Activated CD8-positive, alpha-beta T cell treated with anti-CD3 and anti-CD28 coated beads, Interleukin-2, amount 10 ng/mL, durations not matched to agents 7 days and 5 days (primary cell): ENCODE measurements at regions of chr1 and their contacts with region 1.

Region 1: DNA sequence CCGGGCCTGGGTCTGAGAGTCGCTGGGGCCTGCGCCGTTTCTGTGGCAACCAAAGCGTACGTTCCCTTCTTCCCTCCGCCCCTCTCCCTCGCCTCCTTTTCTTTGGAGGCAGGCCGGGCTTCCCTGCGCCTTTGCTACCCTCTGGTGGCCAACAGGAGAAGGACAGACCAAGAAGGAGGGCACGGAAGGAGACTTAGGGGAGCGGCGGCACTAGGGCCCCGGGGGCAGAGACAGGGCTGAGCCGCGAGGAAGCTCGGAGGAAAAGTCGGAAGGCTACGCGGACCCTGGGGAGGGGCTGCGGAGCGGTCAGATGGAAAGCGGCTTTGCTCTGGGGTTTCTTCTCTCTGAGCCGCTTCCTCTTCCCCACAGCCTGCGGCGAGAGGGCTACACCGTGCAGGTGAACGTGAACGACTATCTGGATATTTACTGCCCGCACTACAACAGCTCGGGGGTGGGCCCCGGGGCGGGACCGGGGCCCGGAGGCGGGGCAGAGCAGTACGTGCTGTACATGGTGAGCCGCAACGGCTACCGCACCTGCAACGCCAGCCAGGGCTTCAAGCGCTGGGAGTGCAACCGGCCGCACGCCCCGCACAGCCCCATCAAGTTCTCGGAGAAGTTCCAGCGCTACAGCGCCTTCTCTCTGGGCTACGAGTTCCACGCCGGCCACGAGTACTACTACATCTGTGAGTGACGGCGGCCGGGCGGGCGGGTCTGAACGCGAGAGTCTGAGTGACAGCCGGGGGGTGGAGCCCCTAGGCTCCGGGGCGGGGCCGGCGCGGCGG is 6.3 kb downstream of the EFNA3 start:
- DNase-seq: peak; percentile 96
- ATAC-seq: peak; percentile 86
- H3K4me3 Mint-ChIP-seq: peak overlapping the region; percentile 91
- H3K27ac Mint-ChIP-seq: peak overlapping the region; percentile 95
- H3K4me1 Mint-ChIP-seq: peaks cover 41% of the 10 kb centered on the region
- H3K27me3 Mint-ChIP-seq: peaks cover 28% of the 10 kb centered on the region

Region 2: DNA sequence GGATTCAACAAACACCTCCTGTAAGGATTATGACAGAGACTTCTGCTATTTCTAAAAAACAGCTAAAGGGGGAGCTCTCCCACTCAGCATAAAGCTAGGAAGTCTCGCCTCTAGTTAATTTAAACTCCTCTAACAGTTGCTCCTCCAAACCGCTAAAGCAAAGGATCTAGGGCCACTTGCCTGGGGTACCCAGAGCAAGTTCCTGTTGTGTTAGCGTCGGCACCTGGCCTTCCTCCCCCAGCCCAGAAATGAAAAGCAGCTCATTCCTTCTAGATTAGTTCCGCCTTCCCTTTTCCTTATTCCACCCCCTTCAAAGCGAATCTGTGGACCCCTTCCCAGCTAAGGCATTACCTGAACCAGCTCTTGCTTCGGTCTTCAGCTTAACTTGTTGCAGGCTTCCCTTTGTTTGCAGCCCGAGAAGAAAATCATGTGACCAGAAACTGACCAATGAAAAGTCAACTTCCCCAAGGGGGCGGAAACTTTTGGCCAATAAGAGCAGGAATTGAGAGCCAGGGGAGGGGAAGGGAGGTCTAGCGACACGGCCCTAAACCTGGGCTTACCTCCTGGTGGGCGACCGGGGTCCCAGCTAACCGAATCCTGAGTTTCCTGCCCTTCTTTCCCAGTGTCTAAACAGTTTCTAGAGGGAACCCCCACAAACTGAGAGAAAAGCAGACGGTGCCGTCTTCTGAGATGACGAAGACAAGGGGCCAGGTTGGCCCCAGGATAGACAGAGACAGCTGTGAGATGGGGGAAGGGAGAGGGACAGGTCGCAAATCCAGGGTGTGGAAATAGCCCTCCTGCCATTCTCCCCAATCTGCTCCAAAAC is 129.0 kb before region 1 on chr1 and contains the start of gene PBXIP1:
- CTCF ChIA-PET with region 1: interaction called, 10 read pairs
- POLR2A ChIA-PET with region 1: no interaction called
- DNase-seq: peak; percentile 91
- ATAC-seq: peak; percentile 47
- H3K4me3 Mint-ChIP-seq: peak within 1 kb of the TSS; percentile 91
- H3K27ac Mint-ChIP-seq: peak within 1 kb of the TSS; percentile 96
- H3K4me1 Mint-ChIP-seq: peaks cover 80% of the 10 kb centered on the region
- H3K27me3 Mint-ChIP-seq: no peaks in the 10 kb centered on the region
- total RNA-seq, gene PBXIP1: 44.5 to 48.2 TPM

Region 3: GRCh38 chr1:154992721-154993571 is 92.0 kb before region 1 on chr1:
- CTCF ChIA-PET with region 1: interaction called, 10 read pairs
- POLR2A ChIA-PET with region 1: no interaction called
- DNase-seq: no peak
- ATAC-seq: no peak
- H3K4me3 Mint-ChIP-seq: no peak overlapping the region
- H3K27ac Mint-ChIP-seq: no peak overlapping the region
- H3K4me1 Mint-ChIP-seq: peaks cover 27% of the 10 kb centered on the region
- H3K27me3 Mint-ChIP-seq: no peaks in the 10 kb centered on the region

Region 4: GRCh38 chr1:155050560-155051341 is 34.2 kb before region 1 on chr1 and contains the start of gene ADAM15:
- CTCF ChIA-PET with region 1: interaction called, 61 read pairs
- POLR2A ChIA-PET with region 1: no interaction called
- DNase-seq: peak; percentile 81
- ATAC-seq: peak; percentile 89
- H3K4me3 Mint-ChIP-seq: peak within 1 kb of the TSS; percentile 83
- H3K27ac Mint-ChIP-seq: peak within 1 kb of the TSS; percentile 85
- H3K4me1 Mint-ChIP-seq: peaks cover 31% of the 10 kb centered on the region
- H3K27me3 Mint-ChIP-seq: peaks cover under 1% of the 10 kb centered on the region
- total RNA-seq, gene ADAM15: 29.7 to 29.8 TPM

Region 5: DNA sequence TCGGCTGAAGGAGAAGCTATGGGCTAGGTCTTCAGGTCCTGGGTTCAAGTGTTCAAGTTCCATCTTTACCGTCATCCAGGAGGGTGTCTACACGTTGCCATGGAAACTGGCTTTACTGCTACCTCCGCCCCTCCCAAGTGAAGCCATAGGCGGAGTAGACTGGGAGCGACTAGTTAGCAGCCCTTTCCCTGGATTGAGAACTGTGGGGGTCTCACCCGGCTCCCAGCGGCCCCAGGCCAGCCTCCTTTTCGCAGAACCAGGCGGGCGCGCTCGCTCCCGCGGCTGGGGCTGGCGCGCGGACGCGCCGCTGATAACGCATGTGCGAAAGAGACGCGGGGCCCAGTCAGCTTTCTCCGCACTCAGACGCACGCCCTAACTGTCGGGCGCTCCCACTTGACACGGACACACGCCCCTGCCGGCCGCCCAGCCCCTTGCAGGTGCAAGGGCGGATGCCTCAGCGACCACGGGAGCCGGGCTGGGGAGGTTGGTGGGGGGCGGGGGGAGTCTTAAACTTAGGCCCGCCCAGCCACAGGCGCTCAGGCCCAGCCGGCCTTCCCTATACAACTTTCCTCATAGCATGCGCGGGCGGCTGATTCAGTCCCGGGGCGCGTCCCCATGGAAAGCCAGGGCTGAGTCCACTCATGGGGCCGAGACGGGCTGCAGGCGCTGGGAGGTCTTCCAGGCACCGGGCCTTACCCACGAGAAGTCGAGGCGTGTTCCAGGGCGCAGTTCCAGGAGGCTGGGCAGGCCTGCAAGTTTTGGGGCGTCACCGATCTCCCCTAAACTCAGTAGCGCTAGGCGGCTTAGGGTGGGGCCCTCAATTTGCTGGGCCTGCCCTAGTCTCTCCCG is 14.0 kb before region 1 on chr1:
- CTCF ChIA-PET with region 1: interaction called, 201 read pairs
- POLR2A ChIA-PET with region 1: interaction called, 4 read pairs
- DNase-seq: peak; percentile 85
- ATAC-seq: peak; percentile 90
- H3K4me3 Mint-ChIP-seq: peak overlapping the region; percentile 15
- H3K27ac Mint-ChIP-seq: no peak overlapping the region
- H3K4me1 Mint-ChIP-seq: peaks cover 58% of the 10 kb centered on the region
- H3K27me3 Mint-ChIP-seq: peaks cover 7% of the 10 kb centered on the region

Region 6: GRCh38 chr1:155105604-155106022 is 20.7 kb after region 1 on chr1:
- CTCF ChIA-PET with region 1: no interaction called
- POLR2A ChIA-PET with region 1: no interaction called
- DNase-seq: no peak
- ATAC-seq: no peak
- H3K4me3 Mint-ChIP-seq: no peak overlapping the region
- H3K27ac Mint-ChIP-seq: no peak overlapping the region
- H3K4me1 Mint-ChIP-seq: no peaks in the 10 kb centered on the region
- H3K27me3 Mint-ChIP-seq: peaks cover 3% of the 10 kb centered on the region

Region 7: DNA sequence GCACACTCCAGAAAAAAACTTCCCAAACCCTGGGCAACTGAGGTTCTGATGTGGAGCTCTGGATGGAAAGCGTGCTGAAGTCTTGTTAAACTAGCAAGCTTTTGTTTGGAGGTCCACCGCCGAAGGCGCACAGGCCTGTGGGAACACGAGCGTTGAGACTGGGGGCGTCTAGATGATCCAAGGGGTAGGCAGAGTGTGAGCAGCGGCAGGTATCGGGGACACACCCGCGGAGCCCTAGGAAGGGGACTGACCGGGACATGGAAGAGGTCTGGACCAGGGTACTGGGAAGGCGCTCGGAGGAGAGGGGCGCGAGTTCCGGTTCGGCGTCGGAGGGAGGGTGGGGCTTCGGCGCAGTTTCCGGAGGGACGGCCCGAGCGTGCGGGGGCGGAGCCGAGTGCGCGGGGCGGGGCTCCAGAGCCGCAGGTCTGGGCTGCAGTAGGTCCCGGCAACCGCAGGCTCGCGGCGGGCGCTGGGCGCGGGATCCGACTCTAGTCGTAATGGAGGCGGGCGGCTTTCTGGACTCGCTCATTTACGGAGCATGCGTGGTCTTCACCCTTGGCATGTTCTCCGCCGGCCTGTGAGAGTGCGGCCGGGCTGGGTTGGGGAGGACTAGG is 50.6 kb after region 1 on chr1 and contains the start of gene SLC50A1:
- CTCF ChIA-PET with region 1: interaction called, 18 read pairs
- POLR2A ChIA-PET with region 1: interaction called, 3 read pairs
- DNase-seq: peak; percentile 95
- ATAC-seq: peak; percentile 84
- H3K4me3 Mint-ChIP-seq: peak within 1 kb of the TSS; percentile 98
- H3K27ac Mint-ChIP-seq: peak within 1 kb of the TSS; percentile 99
- H3K4me1 Mint-ChIP-seq: peaks cover 47% of the 10 kb centered on the region
- H3K27me3 Mint-ChIP-seq: no peaks in the 10 kb centered on the region
- total RNA-seq, gene SLC50A1: 37.5 to 38.9 TPM

Region 8: GRCh38 chr1:155193275-155193990 is 108.5 kb after region 1 on chr1:
- CTCF ChIA-PET with region 1: interaction called, 14 read pairs
- POLR2A ChIA-PET with region 1: no interaction called
- DNase-seq: peak; percentile 82
- ATAC-seq: peak; percentile 49
- H3K4me3 Mint-ChIP-seq: peak overlapping the region; percentile 84
- H3K27ac Mint-ChIP-seq: peak overlapping the region; percentile 98
- H3K4me1 Mint-ChIP-seq: peaks cover 40% of the 10 kb centered on the region
- H3K27me3 Mint-ChIP-seq: no peaks in the 10 kb centered on the region